Spleen (tissue), 13 donors: ENCODE measurements at regions of chr1 and their contacts with region 1.

Region 1: GRCh38 chr1:236868625-236869467 is 73.8 kb downstream of the MTR start:
- DNase-seq: no peak
- H3K4me3 ChIP-seq: no peak overlapping the region
- H3K27ac ChIP-seq: peak overlapping the region in 3 of 8 donors; percentile 65 to 79 (median 71)
- H3K4me1 ChIP-seq: peaks cover 0 to 22% (median 7%) of the 10 kb centered on the region in 6 donors
- H3K27me3 ChIP-seq: no peaks in the 10 kb centered on the region
- CTCF ChIP-seq: peak; percentile 73 to 96 (median 93)
- POLR2A ChIP-seq: no peak

Region 2: GRCh38 chr1:236759252-236759859 is 109.5 kb before region 1 on chr1:
- intact Hi-C with region 1: loop called (anchors 10 kb)
- DNase-seq: no peak
- H3K4me3 ChIP-seq: no peak overlapping the region
- H3K27ac ChIP-seq: no peak overlapping the region
- H3K4me1 ChIP-seq: peaks cover 0 to 5% (median 0%) of the 10 kb centered on the region in 6 donors
- H3K27me3 ChIP-seq: no peaks in the 10 kb centered on the region
- CTCF ChIP-seq: peak in 10 of 11 experiments; percentile 9 to 63 (median 52)
- POLR2A ChIP-seq: no peak

Region 3: GRCh38 chr1:237748171-237748960 is 879.5 kb after region 1 on chr1:
- intact Hi-C with region 1: no loop called
- DNase-seq: no peak
- H3K4me3 ChIP-seq: no peak overlapping the region
- H3K27ac ChIP-seq: no peak overlapping the region
- H3K4me1 ChIP-seq: no peaks in the 10 kb centered on the region
- H3K27me3 ChIP-seq: no peaks in the 10 kb centered on the region
- CTCF ChIP-seq: no peak
- POLR2A ChIP-seq: no peak